Motor neuron (in vitro differentiated cells): ENCODE measurements at regions of chr3 and their contacts with region 1.

Region 1: GRCh38 chr3:159260049-159260662 is 458.3 kb downstream of the MFSD1 start:
- ATAC-seq: peak in 4 of 8 experiments; percentile 30 to 62 (median 47)
- H3K4me3 ChIP-seq: no peak overlapping the region
- H3K27ac ChIP-seq: no peak overlapping the region
- H3K4me1 ChIP-seq: peaks cover 0 to 13% of the 10 kb centered on the region in 2 donors

Region 2: DNA sequence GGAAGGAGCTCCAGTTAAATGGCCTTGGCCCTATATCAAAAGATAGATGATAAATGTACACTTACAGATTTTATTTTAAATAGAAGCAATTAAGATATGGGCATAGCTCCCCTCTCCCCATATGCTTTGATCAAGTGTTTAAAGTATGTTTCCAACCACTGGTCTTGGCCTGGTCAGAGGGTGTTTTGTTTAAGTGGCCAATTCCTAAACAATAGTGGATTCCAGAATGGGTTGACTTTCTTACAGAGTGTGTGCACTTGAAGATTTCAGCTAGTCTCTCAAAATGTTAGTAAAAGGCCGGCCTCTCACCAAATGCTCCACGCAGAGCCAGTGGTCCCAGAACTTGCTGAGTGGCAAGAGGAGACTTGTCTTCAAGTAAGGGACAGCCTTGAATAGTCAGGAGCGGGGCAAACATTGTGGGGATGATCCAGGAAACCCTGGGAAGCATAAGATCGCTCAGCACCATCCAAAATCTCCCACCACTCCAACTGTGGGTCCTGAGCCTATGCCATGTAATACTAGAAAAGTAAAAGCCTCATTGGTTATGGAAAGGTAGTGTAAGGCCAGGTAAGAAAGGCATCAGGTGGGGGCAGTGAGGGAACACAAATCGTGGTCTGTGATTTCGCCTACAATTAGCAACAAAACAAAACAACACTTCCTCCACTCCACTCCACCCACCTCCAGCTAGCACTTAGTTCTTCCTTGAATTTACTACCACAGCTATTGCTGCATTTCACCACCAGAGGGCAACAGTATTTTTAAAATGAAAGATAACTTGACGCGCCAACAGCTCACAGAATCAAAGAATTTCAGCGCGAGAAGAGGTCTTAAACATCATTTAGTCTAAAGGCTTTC is 532.7 kb before region 1 on chr3:
- in situ Hi-C with region 1: loop called in 1 of 9 experiments (anchors 25 kb)
- ATAC-seq: peak in 7 of 8 experiments; percentile 5 to 37 (median 27)
- H3K4me3 ChIP-seq: no peak overlapping the region
- H3K27ac ChIP-seq: no peak overlapping the region
- H3K4me1 ChIP-seq: peaks cover 6 to 7% of the 10 kb centered on the region in 2 donors

Region 3: GRCh38 chr3:158918008-158918407 is 342.1 kb before region 1 on chr3:
- in situ Hi-C with region 1: loop called in 3 of 9 experiments (anchors 10 to 25 kb)
- ATAC-seq: peak; percentile 82 to 98 (median 92)
- H3K4me3 ChIP-seq: no peak overlapping the region
- H3K27ac ChIP-seq: no peak overlapping the region
- H3K4me1 ChIP-seq: peaks cover 5 to 25% of the 10 kb centered on the region in 2 donors

Region 4: GRCh38 chr3:159102001-159102400 is 158.2 kb before region 1 on chr3:
- in situ Hi-C with region 1: no loop called
- ATAC-seq: no peak
- H3K4me3 ChIP-seq: no peak overlapping the region
- H3K27ac ChIP-seq: no peak overlapping the region
- H3K4me1 ChIP-seq: peaks cover 0 to 6% of the 10 kb centered on the region in 2 donors

Region 5: DNA sequence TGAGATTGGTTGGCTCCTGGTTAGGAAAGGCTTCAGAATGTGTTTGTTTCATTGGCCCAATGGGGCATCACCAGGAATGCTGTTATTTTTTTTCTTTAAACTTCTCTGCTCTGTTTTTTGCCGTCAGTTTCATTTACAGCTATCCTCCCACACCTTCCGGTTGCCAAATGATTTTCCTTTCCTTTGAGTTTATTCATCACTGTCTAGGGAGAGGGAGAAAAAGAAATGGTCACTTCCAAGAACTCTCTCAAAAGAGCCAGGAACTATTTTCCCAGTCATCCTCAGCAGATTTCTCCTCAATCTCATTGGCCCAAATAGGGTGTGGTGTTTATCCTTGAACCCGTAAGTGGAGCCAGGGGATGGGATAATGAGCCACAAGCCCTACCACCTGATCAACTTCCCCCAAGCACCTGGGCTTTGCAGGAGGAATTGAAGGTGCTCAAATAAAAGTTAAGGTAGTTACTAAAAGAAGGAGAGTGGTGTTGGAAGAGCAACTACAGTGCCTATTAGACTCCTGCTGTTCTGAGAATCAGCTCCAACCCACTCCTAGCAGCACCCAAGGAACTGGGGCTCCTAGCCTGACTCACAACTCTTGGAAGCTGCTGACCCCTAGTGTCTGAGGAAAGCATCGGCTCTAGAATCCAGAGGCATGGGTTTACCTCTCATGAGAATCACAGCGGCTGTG is 544.7 kb after region 1 on chr3:
- in situ Hi-C with region 1: loop called in 7 of 9 experiments (anchors 10 to 25 kb)
- ATAC-seq: peak; percentile 93 to 99 (median 98)
- H3K4me3 ChIP-seq: no peak overlapping the region
- H3K27ac ChIP-seq: no peak overlapping the region
- H3K4me1 ChIP-seq: peaks cover 0 to 3% of the 10 kb centered on the region in 2 donors